Panc1 (cell line): ENCODE measurements at regions of chr5 and their contacts with region 1.

Region 1: DNA sequence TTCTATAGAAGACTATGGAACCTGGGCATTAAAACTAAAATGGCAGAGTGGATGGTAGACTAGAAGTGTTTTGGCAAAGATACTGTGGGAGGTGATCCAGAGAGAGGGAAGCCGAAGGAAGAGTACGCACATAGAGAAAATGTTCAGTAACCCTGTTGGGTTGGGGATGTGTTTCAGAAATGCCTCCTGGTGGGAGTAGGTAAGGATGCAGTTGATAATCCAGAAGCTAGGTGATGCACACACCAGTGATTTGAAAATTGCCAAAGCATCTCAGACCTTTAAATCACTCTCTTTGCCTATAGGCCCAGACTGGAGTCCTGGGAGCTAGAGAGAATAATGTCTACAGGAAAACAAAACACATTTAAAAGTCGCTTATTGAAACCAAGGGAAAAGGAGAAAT is 177.3 kb downstream of the ZSWIM6 start:
- DNase-seq: no peak
- ATAC-seq: no peak
- H3K4me3 ChIP-seq: no peak overlapping the region
- H3K27ac ChIP-seq: no peak overlapping the region
- H3K4me1 ChIP-seq: no peaks in the 10 kb centered on the region
- H3K27me3 ChIP-seq: no peaks in the 10 kb centered on the region
- CTCF ChIP-seq: no peak

Region 2: GRCh38 chr5:60026161-60026560 is 1483.2 kb before region 1 on chr5:
- CTCF ChIA-PET with region 1: no interaction called
- POLR2A ChIA-PET with region 1: no interaction called
- in situ Hi-C with region 1: no loop called
- intact Hi-C with region 1: no loop called
- DNase-seq: no peak
- ATAC-seq: no peak
- H3K4me3 ChIP-seq: no peak overlapping the region
- H3K27ac ChIP-seq: no peak overlapping the region
- H3K4me1 ChIP-seq: no peaks in the 10 kb centered on the region
- H3K27me3 ChIP-seq: no peaks in the 10 kb centered on the region
- CTCF ChIP-seq: no peak

Region 3: DNA sequence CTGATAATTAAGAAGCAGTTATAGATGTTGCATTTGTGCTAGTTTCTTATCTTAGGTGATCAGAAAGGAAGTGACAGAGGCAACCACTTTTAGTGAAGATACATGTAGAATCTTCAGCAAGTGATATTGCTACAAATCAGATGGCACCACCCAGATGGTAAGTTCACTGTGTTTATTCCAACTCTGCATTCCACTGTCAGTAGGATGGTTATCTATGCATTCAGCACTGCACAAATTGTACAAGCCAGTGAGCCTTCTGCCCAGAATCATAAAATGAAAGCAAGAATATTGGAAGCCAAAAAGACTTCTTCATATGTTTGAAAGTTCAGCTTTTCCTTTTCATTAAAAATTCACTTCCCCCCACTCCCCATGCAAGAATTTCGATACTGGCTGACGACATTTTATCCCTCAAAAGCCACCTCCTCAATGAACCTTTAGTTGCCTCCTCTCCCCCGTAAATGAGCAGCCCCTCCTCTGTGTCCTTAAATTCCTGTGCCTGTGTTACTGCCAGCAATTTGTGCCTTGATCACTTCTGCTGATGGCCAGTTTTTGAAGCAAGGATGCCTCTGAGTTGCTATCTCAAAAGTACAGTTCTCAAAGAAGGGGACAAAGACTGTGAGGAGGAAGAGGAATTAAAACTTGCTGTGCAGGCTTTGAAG is 85.7 kb before region 1 on chr5:
- CTCF ChIA-PET with region 1: no interaction called
- POLR2A ChIA-PET with region 1: no interaction called
- in situ Hi-C with region 1: no loop called
- intact Hi-C with region 1: no loop called
- DNase-seq: no peak
- ATAC-seq: no peak
- H3K4me3 ChIP-seq: no peak overlapping the region
- H3K27ac ChIP-seq: no peak overlapping the region
- H3K4me1 ChIP-seq: peaks cover 8% of the 10 kb centered on the region; the same call in 1 of the 2 replicates
- H3K27me3 ChIP-seq: no peaks in the 10 kb centered on the region
- CTCF ChIP-seq: no peak

Region 4: DNA sequence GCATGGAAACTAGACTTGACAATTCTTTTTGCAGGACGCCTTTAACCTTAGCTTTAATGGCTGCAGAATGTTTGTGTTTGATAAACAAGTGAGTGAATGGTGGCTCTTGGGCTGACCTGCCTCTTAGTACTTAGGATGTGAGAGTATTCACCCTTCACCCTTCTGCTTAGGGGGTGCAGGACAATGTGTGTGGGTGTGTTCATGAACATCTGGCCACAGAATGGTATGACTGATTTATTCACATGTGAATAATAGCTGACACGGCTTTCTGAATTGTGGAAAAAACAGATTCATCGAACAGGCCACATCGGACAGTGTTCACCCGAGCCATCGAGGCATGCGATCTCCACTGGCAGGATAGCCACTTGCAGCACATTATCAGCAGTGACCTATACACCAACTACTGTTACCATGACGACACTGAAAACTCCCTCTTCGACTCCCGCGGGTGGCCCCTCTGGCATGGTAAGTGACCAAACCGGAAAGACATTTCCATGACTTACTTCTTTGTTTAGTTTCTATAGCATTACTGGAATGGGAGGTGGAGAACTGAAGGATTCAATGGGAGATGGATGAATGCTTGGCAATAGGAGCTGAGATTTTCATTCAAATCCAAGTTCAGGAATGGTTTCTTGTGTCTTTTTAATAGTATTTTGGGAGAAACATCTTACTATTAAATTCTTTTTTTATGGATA is 16.3 kb after region 1 on chr5:
- CTCF ChIA-PET with region 1: no interaction called
- POLR2A ChIA-PET with region 1: no interaction called
- in situ Hi-C with region 1: no loop called
- intact Hi-C with region 1: loop called (anchors 1 kb)
- DNase-seq: no peak
- ATAC-seq: no peak
- H3K4me3 ChIP-seq: no peak overlapping the region
- H3K27ac ChIP-seq: no peak overlapping the region
- H3K4me1 ChIP-seq: no peaks in the 10 kb centered on the region
- H3K27me3 ChIP-seq: no peaks in the 10 kb centered on the region
- CTCF ChIP-seq: no peak